Sciatic nerve (tissue), 2 donors: ENCODE measurements at regions of chr7 and their contacts with region 1.

Region 1: GRCh38 chr7:4235596-4235995 is 446.5 kb upstream of the FOXK1 start:
- DNase-seq: peak; percentile 27
- ATAC-seq: no peak

Region 2: GRCh38 chr7:2248984-2249694 is 1986.5 kb before region 1 on chr7:
- intact Hi-C with region 1: loop called (anchors 5 kb)
- DNase-seq: peak; percentile 86
- ATAC-seq: peak; percentile 94

Region 3: GRCh38 chr7:4187231-4187630 is 48.4 kb before region 1 on chr7:
- intact Hi-C with region 1: loop called (anchors 1 kb)
- DNase-seq: no peak
- ATAC-seq: no peak